ENCODE measurements at regions of chr4 and their contacts with region 1.

Region 1: GRCh38 chr4:112567536-112567935 is 51.6 kb upstream of the NEUROG2 start:
- DNase-seq: no peak
- ATAC-seq: no peak
- H3K4me3 ChIP-seq: no peak overlapping the region
- H3K27ac ChIP-seq: no peak overlapping the region
- H3K4me1 ChIP-seq: no peaks in the 10 kb centered on the region
- H3K27me3 ChIP-seq: no peaks in the 10 kb centered on the region
- CTCF ChIP-seq: no peak

Region 2: GRCh38 chr4:112552668-112553067 is 14.9 kb before region 1 on chr4:
- intact Hi-C with region 1: loop called in 1 of 2 experiments (anchors 2 kb)
- DNase-seq: no peak
- ATAC-seq: no peak
- H3K4me3 ChIP-seq: no peak overlapping the region
- H3K27ac ChIP-seq: no peak overlapping the region
- H3K4me1 ChIP-seq: no peaks in the 10 kb centered on the region
- H3K27me3 ChIP-seq: no peaks in the 10 kb centered on the region
- CTCF ChIP-seq: no peak

Measured in psoas muscle (tissue), 8 donors.